ENCODE measurements at regions of chr10 and their contacts with region 1.

Region 1: GRCh38 chr10:101303087-101303703 is 50.8 kb upstream of the BTRC start:
- DNase-seq: no peak
- H3K4me3 Mint-ChIP-seq: no peak overlapping the region
- H3K27ac Mint-ChIP-seq: no peak overlapping the region
- H3K4me1 Mint-ChIP-seq: no peaks in the 10 kb centered on the region
- H3K27me3 Mint-ChIP-seq: peaks cover 22% of the 10 kb centered on the region

Region 2: DNA sequence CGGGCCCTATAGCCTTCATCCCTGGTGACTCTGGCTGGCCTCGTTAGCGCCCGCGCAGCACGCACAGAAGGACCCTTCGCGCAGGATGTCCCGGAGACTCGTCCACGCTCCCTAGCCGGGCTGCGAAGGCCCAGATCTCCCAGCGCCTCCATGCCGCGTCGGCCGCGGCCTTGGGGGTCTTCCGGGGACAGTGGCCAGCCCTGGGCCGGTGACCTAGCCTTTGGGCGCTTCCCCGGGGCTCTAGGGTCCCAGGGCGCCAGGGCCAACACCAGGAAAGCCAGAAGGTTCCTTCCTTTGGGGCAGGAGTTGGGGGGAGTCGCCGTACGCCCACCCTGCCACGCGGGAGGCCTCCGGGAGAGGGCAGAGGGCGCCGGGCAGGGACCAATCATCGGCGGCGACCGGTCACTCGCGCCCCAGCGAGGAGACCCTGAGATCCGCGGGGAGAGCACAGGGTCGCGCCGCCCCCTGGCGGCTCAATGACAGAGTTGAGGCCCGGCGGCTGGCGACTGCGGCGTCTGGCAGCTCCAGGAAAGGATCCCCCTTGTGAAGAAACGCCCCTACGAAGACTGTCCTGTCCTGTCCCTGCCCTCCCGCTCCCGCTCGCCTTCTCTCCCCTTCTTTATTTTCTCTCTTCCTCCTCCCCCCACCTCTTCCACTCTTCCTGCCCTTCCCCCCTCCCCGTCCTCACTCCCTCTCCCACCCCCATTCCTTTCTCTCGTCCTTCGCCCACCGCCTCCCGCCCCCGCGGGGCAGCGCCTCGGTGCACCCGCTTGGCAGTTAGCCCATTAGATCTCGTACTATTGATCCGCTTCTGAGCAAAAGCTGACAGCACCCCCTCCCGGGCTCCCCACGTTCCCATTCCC is 11.6 kb before region 1 on chr10:
- CTCF ChIA-PET with region 1: interaction called, 11 read pairs
- POLR2A ChIA-PET with region 1: no interaction called
- intact Hi-C with region 1: no loop called
- DNase-seq: peak; percentile 58
- H3K4me3 Mint-ChIP-seq: peak overlapping the region; percentile 66
- H3K27ac Mint-ChIP-seq: no peak overlapping the region
- H3K4me1 Mint-ChIP-seq: peaks cover 5% of the 10 kb centered on the region
- H3K27me3 Mint-ChIP-seq: peaks cover 65% of the 10 kb centered on the region

Region 3: GRCh38 chr10:101485681-101486554 is 182.7 kb after region 1 on chr10:
- CTCF ChIA-PET with region 1: no interaction called
- POLR2A ChIA-PET with region 1: no interaction called
- intact Hi-C with region 1: no loop called
- DNase-seq: no peak
- H3K4me3 Mint-ChIP-seq: no peak overlapping the region
- H3K27ac Mint-ChIP-seq: no peak overlapping the region
- H3K4me1 Mint-ChIP-seq: no peaks in the 10 kb centered on the region
- H3K27me3 Mint-ChIP-seq: no peaks in the 10 kb centered on the region

Region 4: DNA sequence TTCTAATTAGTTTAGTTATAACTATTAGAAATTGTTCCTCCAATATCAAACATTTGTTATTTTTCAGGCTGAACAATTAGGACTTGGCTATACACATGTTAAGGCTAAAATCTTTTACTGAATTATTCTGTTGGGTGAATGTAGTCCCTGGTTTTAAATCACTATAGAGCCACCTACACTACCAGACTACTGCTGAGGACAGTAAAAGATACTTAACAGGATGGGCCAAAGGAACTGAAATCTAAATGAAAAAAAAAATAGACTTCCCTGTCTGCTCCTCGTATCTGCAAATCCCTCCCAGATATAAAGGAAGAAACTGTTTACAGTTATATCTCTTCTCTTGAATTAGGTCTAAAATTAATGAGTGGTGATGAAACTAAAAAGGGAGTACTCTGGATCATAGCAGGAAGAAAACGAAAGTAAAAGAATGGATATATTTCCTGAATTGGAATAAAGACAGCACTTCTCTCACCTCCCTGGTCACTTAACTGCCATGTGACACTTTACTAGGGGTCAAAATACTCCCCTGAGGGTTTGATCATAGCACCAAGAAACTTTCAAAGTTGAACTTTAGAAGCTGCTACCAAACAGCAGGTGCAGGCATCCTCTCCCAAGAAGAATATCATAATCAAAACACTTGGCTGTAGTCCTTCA is 379.1 kb after region 1 on chr10:
- CTCF ChIA-PET with region 1: no interaction called
- POLR2A ChIA-PET with region 1: no interaction called
- intact Hi-C with region 1: no loop called
- DNase-seq: no peak
- H3K4me3 Mint-ChIP-seq: no peak overlapping the region
- H3K27ac Mint-ChIP-seq: no peak overlapping the region
- H3K4me1 Mint-ChIP-seq: peaks cover 22% of the 10 kb centered on the region
- H3K27me3 Mint-ChIP-seq: no peaks in the 10 kb centered on the region

Measured in activated CD4-positive, alpha-beta memory T cell treated with anti-CD3 and anti-CD28 coated beads for 36 hours (primary cell).